ENCODE measurements at regions of chr7 and their contacts with region 1.

Region 1: GRCh38 chr7:98841179-98841997 is 28.4 kb downstream of the TMEM130 start:
- DNase-seq: peak; percentile 72
- ATAC-seq: peak; percentile 87
- H3K4me3 Mint-ChIP-seq: no peak overlapping the region
- H3K27ac Mint-ChIP-seq: no peak overlapping the region
- H3K4me1 Mint-ChIP-seq: peaks cover 2% of the 10 kb centered on the region
- H3K27me3 Mint-ChIP-seq: peaks cover 5% of the 10 kb centered on the region
- CTCF ChIP-seq: peak; percentile 90

Region 2: DNA sequence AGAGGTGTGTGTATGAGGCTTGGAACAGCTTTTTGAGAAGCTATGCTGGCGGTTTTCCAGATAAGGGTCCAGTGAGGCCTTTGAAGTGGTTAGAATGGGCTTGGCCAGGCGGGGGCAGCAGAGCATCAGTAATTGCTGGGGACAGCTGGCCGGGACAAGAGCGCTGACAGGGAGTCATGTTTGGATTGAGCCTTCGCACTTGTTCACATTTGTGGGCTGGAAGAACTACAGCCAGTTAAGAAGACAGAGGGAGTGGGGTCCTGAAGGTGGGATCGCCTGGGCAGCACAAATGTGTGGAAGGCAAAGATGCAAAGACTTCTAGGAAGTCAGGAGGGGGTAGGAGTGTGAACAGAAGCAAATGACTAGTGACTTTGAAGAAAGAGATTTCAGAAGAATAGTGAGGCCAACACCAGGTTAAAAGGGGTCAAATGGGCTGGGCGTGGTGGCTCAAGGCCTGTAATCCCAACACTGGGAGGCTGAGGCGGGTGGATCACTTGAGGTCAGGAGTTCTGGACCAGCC is 1736.6 kb before region 1 on chr7:
- CTCF ChIA-PET with region 1: no interaction called
- POLR2A ChIA-PET with region 1: no interaction called
- intact Hi-C with region 1: no loop called
- DNase-seq: peak; percentile 74
- ATAC-seq: peak; percentile 94
- H3K4me3 Mint-ChIP-seq: no peak overlapping the region
- H3K27ac Mint-ChIP-seq: no peak overlapping the region
- H3K4me1 Mint-ChIP-seq: no peaks in the 10 kb centered on the region
- H3K27me3 Mint-ChIP-seq: peaks cover 16% of the 10 kb centered on the region
- CTCF ChIP-seq: peak; percentile 72

Region 3: DNA sequence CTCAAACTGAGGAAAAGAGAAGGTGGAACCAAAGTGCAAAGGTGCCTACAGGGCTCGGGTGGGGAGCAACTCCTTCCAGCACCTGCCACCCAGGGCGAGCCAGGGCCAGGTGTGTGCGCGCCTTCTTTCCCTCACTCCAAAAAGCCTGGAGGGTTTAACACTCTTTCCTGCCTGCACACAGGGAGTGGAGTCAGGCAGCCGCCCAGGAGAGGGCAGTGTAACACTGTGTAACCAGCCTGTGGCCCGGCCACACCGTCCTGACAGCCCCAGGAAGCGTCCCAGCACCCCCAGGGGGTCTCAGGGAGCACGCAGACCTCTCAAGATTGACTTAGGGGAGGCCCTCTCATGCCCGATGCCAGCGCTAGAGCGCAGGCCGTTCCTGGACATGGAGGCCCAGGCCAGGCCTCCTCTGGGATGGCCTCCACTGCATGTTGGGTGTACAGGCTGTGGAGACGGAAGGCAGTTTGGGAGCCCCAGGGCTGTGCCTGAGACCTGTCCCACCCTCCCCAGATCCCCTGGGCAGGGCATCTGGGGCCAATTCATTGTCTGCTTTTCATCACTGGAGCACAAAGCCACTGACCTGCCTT is 546.5 kb before region 1 on chr7:
- CTCF ChIA-PET with region 1: interaction called, 8 read pairs
- POLR2A ChIA-PET with region 1: no interaction called
- intact Hi-C with region 1: loop called (anchors 2 kb)
- DNase-seq: peak; percentile 49
- ATAC-seq: peak; percentile 79
- H3K4me3 Mint-ChIP-seq: no peak overlapping the region
- H3K27ac Mint-ChIP-seq: no peak overlapping the region
- H3K4me1 Mint-ChIP-seq: no peaks in the 10 kb centered on the region
- H3K27me3 Mint-ChIP-seq: no peaks in the 10 kb centered on the region
- CTCF ChIP-seq: no peak

Region 4: DNA sequence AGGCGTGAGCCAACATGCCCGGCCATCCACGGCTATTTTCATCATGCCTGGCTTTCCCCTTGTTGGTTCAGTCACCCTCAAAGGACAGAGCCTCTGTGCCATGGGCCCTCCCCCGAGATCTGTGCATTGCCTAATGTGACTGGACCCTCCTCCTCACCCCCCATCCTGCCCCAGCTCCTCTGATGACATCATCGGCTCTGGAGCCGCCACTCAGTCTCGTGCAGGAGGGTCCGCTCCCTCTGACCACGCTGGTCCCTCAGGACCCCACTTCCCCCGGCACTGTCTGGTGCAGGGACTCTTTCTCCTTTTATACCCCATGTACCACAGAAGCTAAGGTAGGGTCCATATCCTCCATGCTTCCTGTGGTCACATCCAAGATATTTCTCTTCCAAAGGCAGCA is 407.3 kb before region 1 on chr7:
- CTCF ChIA-PET with region 1: interaction called, 22 read pairs
- POLR2A ChIA-PET with region 1: no interaction called
- intact Hi-C with region 1: loop called (anchors 1 kb)
- DNase-seq: no peak
- ATAC-seq: no peak
- H3K4me3 Mint-ChIP-seq: no peak overlapping the region
- H3K27ac Mint-ChIP-seq: no peak overlapping the region
- H3K4me1 Mint-ChIP-seq: peaks cover 10% of the 10 kb centered on the region
- H3K27me3 Mint-ChIP-seq: peaks cover 14% of the 10 kb centered on the region
- CTCF ChIP-seq: no peak

Region 5: DNA sequence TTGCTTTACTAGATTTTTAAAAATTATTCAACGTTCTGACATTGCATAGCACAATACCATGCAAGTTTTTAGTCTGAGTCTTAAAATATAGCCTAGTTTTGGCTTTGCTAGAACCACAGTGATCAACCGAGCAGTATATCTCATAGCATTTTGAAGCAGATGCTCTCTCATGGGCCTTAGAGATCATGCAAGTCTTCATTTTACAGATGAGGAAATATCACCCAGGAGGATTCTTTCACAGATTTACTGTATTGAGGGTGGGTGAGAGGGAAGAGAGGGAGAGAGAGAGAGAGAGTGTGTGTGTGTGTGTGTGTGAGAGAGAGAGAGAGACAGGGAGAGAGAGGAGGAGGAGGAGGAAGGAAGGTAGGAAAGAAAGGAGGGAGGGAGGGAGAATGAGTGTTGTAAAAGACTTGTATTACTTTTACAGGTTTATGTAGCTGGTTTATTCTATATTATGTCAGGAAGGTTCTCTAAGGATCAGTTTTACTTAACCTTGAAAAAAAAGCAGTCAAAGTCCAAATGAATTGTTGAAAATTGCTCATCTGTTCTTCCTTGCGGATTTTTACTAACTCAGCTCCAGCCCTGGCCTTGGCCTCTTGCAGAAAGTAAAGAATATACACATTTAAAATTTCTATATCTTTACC is 238.5 kb before region 1 on chr7:
- CTCF ChIA-PET with region 1: no interaction called
- POLR2A ChIA-PET with region 1: no interaction called
- intact Hi-C with region 1: no loop called
- DNase-seq: no peak
- ATAC-seq: no peak
- H3K4me3 Mint-ChIP-seq: no peak overlapping the region
- H3K27ac Mint-ChIP-seq: no peak overlapping the region
- H3K4me1 Mint-ChIP-seq: no peaks in the 10 kb centered on the region
- H3K27me3 Mint-ChIP-seq: peaks cover 7% of the 10 kb centered on the region
- CTCF ChIP-seq: no peak

Region 6: DNA sequence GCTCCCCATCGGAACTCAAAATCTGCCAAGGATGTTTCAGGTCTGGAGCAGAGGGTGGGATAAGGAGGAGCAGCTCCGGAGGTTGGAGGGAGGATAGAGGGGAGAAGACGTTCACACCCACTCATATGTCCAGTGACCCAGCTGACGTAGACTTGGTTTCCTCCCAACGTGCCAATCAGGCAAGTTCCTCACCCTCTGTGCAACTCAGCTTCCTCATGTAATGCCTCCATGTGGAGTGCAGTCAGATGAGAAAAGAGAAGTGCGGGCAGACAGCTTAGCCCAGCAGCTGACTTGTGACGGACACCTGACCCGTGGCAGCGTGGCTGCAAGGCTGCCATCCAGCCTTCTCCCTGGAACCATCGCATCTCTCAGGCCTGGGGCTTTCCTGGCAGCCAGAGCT is 137.5 kb before region 1 on chr7:
- CTCF ChIA-PET with region 1: no interaction called
- POLR2A ChIA-PET with region 1: no interaction called
- intact Hi-C with region 1: no loop called
- DNase-seq: no peak
- ATAC-seq: no peak
- H3K4me3 Mint-ChIP-seq: no peak overlapping the region
- H3K27ac Mint-ChIP-seq: no peak overlapping the region
- H3K4me1 Mint-ChIP-seq: peaks cover 2% of the 10 kb centered on the region
- H3K27me3 Mint-ChIP-seq: peaks cover 17% of the 10 kb centered on the region
- CTCF ChIP-seq: no peak

Region 7: DNA sequence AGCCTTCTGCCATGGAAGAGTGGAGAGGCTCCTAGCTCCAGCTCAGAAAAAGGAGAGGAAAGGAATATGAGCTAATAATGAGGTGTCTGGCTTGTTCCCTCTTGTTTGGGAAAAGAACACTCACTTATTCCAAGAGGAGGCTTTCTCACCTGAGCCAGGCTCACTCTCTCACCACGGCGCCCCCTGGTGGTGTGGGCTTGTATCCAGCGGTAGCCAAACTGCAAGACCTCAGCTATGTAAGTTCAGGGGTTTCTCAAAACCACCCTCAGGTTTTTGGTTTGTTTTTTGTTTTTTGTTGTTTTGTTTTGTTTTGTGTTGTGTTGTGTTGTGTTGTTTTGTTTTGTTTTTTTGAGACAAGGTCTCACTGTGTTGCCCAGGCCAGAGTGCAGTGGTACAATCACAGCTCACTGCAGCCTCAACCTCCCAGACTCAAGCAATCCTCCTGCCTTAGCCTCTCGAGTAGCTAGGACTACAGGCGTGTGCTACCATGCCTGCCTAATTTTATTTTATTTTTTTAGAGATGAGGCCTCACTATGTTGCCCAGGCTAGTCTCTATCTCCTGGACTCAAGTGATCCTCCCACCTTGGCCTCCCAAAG is 95.6 kb before region 1 on chr7:
- CTCF ChIA-PET with region 1: interaction called, 14 read pairs
- POLR2A ChIA-PET with region 1: no interaction called
- intact Hi-C with region 1: loop called (anchors 5 kb)
- DNase-seq: peak; percentile 62
- ATAC-seq: peak; percentile 31
- H3K4me3 Mint-ChIP-seq: no peak overlapping the region
- H3K27ac Mint-ChIP-seq: no peak overlapping the region
- H3K4me1 Mint-ChIP-seq: no peaks in the 10 kb centered on the region
- H3K27me3 Mint-ChIP-seq: peaks cover 12% of the 10 kb centered on the region
- CTCF ChIP-seq: peak; percentile 87

Region 8: GRCh38 chr7:98878365-98879165 is 37.2 kb after region 1 on chr7 and contains the start of gene TRRAP:
- CTCF ChIA-PET with region 1: interaction called, 4 read pairs
- POLR2A ChIA-PET with region 1: no interaction called
- intact Hi-C with region 1: loop called (anchors 2 kb)
- DNase-seq: peak; percentile 80
- ATAC-seq: peak; percentile 81
- H3K4me3 Mint-ChIP-seq: peak within 1 kb of the TSS; percentile 91
- H3K27ac Mint-ChIP-seq: peak within 1 kb of the TSS; percentile 93
- H3K4me1 Mint-ChIP-seq: peaks cover 19% of the 10 kb centered on the region
- H3K27me3 Mint-ChIP-seq: peaks cover 3% of the 10 kb centered on the region
- CTCF ChIP-seq: peak; percentile 82
- total RNA-seq, gene TRRAP: 73.9 and 77.9 TPM in 2 replicates